MCF 10A (cell line): ENCODE measurements at regions of chr3 and their contacts with region 1.

Region 1: DNA sequence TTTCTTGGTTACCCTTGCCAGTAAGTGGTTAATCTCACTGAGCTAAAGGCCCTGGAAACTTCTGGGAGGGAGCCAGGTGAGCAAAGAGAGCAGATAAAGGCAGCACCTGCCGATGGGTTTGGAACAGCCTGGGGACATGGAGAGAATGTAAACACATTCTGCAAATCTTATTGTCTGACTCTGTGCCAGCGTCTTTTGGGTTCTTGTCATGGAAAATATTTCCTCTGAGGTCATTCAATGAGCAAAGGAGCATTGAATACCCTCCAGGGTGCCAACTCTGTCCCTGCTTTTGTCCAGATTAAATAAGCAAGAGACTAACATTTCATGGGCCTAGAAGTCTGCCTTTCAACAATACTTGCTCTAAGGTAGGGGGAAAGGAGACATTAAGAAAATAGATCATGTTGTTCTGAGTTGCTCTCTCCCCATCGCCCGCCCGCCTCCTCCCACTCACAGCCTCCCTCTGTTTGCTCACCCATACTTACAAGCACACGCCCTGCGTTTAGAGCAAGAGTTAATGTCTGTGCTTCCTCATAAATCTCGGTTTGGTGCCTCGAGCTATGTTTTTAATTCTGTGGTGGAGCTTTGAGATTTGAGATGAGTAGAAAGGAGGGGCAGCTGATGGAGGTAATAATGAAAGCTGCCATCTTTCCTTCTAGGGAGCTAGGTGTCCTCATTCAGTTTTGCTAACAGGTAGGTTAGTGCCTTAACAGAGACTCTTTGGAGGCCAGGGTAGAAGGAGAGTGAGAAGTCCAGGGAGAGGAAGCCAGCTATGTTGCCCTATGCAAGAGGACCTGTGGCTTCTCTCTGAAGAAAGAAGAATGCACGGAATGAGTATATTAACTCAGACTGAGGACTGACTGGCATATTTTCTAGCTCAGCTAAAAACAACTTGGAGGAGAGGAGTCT is 132.9 kb downstream of the TPRG1 start:
- DNase-seq: peak; percentile 96
- H3K4me3 Mint-ChIP-seq: peak overlapping the region; percentile 65
- H3K27ac Mint-ChIP-seq: peak overlapping the region; percentile 99
- H3K4me1 Mint-ChIP-seq: peaks cover 59% of the 10 kb centered on the region
- H3K27me3 Mint-ChIP-seq: no peaks in the 10 kb centered on the region
- CTCF ChIP-seq: no peak

Region 2: GRCh38 chr3:187738331-187739093 is 1566.2 kb before region 1 on chr3:
- CTCF ChIA-PET with region 1: no interaction called
- POLR2A ChIA-PET with region 1: no interaction called
- intact Hi-C with region 1: no loop called
- DNase-seq: peak; percentile 95
- H3K4me3 Mint-ChIP-seq: peak overlapping the region; percentile 98
- H3K27ac Mint-ChIP-seq: peak overlapping the region; percentile 100
- H3K4me1 Mint-ChIP-seq: peaks cover 44% of the 10 kb centered on the region
- H3K27me3 Mint-ChIP-seq: no peaks in the 10 kb centered on the region
- CTCF ChIP-seq: peak; percentile 63

Region 3: GRCh38 chr3:189001559-189001958 is 303.1 kb before region 1 on chr3:
- CTCF ChIA-PET with region 1: no interaction called
- POLR2A ChIA-PET with region 1: no interaction called
- intact Hi-C with region 1: no loop called
- DNase-seq: peak; percentile 72
- H3K4me3 Mint-ChIP-seq: no peak overlapping the region
- H3K27ac Mint-ChIP-seq: no peak overlapping the region
- H3K4me1 Mint-ChIP-seq: peaks cover 6% of the 10 kb centered on the region
- H3K27me3 Mint-ChIP-seq: no peaks in the 10 kb centered on the region
- CTCF ChIP-seq: no peak

Region 4: GRCh38 chr3:189282741-189283140 is 22.0 kb before region 1 on chr3:
- CTCF ChIA-PET with region 1: interaction called, 4 read pairs
- POLR2A ChIA-PET with region 1: interaction called, 495 read pairs
- intact Hi-C with region 1: no loop called
- DNase-seq: no peak
- H3K4me3 Mint-ChIP-seq: no peak overlapping the region
- H3K27ac Mint-ChIP-seq: peak overlapping the region; percentile 80
- H3K4me1 Mint-ChIP-seq: peaks cover 14% of the 10 kb centered on the region
- H3K27me3 Mint-ChIP-seq: no peaks in the 10 kb centered on the region
- CTCF ChIP-seq: no peak

Region 5: DNA sequence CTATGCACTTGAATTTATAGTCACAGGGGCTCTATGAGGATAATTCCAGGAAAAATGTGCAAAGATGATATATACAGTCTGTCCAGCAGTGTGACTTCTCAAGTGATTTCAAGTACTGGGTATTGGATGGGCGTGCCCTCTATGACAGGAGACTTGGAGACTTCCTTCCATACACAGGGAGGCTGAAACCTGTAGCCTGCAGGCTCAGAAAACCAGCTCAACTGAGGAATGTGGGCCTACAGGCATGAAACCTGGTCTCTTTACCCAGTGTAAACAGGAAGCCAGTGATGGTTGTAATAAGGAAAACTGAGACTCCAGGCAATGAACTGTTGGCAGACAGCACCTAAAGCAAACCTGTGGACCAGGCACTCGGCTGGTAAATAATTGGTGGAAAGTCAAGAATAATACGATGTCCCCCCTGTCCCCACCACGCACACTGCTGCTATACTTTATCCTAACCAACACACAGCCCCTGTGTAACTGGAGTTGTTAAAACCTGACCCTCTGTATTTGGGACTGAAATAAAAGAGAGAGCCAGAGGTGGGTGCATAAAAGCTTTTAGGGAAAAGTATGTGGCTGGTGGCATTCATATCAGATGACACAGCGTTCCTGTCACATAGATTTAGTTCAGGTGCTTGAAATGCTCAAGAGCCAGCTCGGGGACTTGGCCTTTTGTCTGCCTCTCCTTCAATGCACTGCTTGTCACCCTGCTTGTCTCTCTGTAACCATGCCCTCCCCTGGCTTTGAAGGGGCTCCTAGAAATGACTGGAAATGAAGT is 11.7 kb after region 1 on chr3:
- CTCF ChIA-PET with region 1: interaction called, 3 read pairs
- POLR2A ChIA-PET with region 1: interaction called, 152 read pairs
- intact Hi-C with region 1: no loop called
- DNase-seq: no peak
- H3K4me3 Mint-ChIP-seq: no peak overlapping the region
- H3K27ac Mint-ChIP-seq: peak overlapping the region; percentile 81
- H3K4me1 Mint-ChIP-seq: peaks cover 32% of the 10 kb centered on the region
- H3K27me3 Mint-ChIP-seq: no peaks in the 10 kb centered on the region
- CTCF ChIP-seq: no peak

Region 6: DNA sequence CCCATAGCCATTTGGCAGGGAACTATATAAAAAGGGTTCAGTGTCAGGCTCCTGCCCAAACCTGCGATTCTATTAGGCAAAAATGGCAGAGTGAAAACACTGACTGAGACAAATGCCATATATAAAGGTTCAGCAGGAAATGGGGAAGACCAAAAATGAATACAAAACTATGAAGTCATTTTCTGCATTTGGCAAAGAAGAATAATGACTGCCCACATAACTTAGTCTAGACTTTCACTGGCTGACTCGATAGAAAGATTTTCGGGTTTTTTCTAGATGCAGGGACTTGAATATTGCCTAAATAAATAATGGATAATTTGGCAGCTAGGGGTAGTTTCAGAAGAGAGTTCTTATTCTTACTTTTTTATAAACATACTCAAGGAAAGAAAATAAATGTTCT is 45.1 kb after region 1 on chr3:
- CTCF ChIA-PET with region 1: interaction called, 5 read pairs
- POLR2A ChIA-PET with region 1: interaction called, 267 read pairs
- intact Hi-C with region 1: no loop called
- DNase-seq: no peak
- H3K4me3 Mint-ChIP-seq: no peak overlapping the region
- H3K27ac Mint-ChIP-seq: no peak overlapping the region
- H3K4me1 Mint-ChIP-seq: peaks cover 20% of the 10 kb centered on the region
- H3K27me3 Mint-ChIP-seq: no peaks in the 10 kb centered on the region
- CTCF ChIP-seq: no peak

Region 7: DNA sequence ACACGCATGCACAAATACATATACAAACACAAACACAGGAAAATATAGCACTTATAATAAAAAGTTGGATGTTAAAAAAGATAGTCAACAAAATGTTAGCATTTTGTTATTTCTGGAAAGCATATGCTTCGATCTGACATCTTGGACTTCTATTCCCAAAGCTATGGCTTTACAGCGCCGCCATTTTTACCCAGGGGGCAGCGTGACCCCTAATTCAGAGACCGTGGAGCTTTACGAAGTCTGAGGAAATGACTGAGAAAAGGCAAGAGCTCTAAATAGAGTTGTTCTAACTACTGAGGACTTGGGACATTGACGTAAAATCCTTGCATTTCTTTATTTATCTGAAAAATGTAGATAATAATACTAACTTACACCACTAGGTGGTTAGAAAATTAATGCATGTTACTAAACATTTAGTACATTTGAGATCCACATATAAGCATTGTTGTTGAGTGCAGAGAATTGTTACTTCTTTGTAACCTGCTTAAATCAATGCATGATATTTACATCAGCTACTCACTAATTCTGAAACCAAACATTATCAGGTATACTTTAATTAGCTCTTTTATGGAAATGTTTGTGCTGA is 481.9 kb after region 1 on chr3:
- CTCF ChIA-PET with region 1: interaction called, 3 read pairs
- POLR2A ChIA-PET with region 1: interaction called, 11 read pairs
- intact Hi-C with region 1: no loop called
- DNase-seq: no peak
- H3K4me3 Mint-ChIP-seq: no peak overlapping the region
- H3K27ac Mint-ChIP-seq: no peak overlapping the region
- H3K4me1 Mint-ChIP-seq: peaks cover 5% of the 10 kb centered on the region
- H3K27me3 Mint-ChIP-seq: no peaks in the 10 kb centered on the region
- CTCF ChIP-seq: peak; percentile 20

Region 8: DNA sequence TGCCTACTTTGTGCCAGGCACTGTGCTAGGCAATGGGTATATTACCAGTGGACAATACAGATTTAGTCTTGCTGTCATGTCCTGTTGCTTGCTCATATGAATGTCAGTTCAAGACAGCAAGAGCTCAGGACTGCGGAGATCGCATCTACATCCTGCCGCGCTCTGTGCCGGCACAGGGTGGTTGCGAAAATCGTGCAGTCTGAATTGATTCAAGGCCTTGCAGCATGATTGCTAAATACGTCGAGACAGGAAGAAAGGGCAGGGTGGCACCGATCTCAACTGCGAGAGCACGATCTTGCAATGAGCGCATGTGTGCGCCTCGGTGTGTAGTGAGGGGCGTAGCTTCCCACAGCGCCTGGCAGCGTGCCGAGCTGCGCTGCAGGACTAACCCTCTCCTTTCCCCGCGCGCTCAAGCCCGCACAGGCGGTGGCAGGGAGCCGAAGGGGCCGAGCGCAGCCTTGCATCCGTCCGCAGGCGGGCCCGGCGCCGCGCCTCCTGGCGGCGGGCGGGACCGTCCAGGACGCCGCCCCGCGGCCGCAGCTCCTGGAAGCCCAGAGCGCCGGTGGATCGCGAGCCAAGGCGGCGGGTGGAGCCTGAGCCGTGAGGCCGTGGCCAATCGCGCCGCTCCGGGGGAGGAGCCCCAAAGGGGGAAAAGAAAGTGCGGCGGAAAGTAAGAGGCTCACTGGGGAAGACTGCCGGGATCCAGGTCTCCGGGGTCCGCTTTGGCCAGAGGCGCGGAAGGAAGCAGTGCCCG is 1208.9 kb after region 1 on chr3 and contains the start of gene IL1RAP:
- CTCF ChIA-PET with region 1: no interaction called
- POLR2A ChIA-PET with region 1: no interaction called
- intact Hi-C with region 1: no loop called
- DNase-seq: peak; percentile 95
- H3K4me3 Mint-ChIP-seq: peak within 1 kb of the TSS; percentile 88
- H3K27ac Mint-ChIP-seq: peak within 1 kb of the TSS; percentile 78
- H3K4me1 Mint-ChIP-seq: peaks cover 36% of the 10 kb centered on the region
- H3K27me3 Mint-ChIP-seq: no peaks in the 10 kb centered on the region
- CTCF ChIP-seq: peak; percentile 38
- total RNA-seq, gene IL1RAP: 46.5 and 62.0 TPM in 2 replicates